ENCODE measurements at regions of chr12 and their contacts with region 1.

Region 1: DNA sequence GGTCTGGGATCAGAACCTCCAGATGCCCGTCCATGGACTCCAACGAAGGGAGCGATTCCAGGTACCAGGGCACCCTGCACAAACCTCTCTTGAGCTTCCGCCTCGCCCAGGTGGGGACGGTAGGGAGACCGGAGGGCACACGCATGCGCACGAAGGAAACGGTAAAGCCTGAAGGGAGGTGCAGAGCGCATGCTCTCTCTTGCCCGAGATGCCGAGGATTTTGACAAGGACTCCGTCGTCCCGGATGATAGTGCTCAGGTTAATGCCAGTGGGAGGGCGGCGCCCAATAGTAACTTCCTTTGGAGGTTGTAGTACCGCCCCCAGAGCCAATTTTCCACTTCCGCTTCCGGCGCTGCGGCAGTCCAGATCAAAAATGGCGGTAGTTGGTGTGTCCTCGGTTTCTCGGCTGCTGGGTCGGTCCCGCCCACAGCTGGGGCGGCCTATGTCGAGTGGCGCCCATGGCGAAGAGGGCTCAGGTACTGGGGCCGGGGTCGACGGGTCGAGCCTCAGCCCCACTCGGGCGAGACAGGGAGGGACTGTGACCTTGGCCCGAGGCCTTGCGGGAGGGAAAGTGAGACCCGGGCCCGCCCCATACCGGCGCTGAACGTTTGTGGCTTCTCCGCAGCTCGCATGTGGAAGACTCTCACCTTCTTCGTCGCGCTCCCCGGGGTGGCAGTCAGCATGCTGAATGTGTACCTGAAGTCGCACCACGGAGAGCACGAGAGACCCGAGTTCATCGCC is at the start of gene COX6A1:
- DNase-seq: peak; percentile 99
- H3K4me3 Mint-ChIP-seq: peak within 1 kb of the TSS; percentile 89
- H3K27ac Mint-ChIP-seq: peak within 1 kb of the TSS; percentile 94
- H3K4me1 Mint-ChIP-seq: peaks cover 23% of the 10 kb centered on the region
- H3K27me3 Mint-ChIP-seq: peaks cover 4% of the 10 kb centered on the region
- total RNA-seq, gene COX6A1: 362 and 363 TPM in 2 replicates

Region 2: DNA sequence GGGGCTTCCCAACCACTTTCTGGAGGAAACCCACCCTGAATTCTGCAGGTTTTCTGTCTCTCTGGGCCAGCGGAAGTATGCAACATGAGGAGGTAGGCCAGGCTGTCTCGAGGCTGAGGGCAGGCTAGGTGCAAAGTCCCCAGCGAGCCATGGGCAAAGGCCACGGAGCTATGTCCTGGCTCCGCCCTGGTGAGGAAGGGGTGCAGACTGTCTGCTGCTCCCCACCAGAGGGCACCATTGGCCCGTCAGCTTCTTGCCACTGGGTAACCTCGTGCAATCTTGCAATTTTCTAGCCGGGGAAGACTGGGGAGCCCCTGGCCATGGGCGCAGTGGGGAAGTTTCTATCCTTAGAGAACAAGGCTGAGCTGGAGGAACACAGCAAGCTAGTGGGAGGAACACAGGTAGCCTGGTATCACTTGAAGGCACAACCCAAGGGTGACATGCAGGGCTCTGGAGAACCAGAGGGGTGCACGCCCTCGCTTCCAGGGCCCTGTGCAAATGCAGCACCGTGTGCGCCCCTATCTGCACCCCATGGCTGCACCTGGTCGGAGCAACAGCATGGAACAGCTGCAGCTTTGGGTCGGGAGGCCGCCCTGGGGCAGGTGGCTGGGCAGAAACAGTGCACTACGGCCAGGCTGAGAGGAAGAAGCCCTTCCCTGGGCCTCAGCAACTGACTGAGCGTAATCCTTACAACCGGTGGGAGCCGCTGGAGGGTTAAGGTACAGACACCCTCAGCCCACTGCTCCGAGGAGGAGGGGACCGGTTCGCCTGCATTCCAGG is 209.4 kb before region 1 on chr12:
- intact Hi-C with region 1: loop called (anchors 10 kb)
- DNase-seq: peak; percentile 96
- H3K4me3 Mint-ChIP-seq: peak overlapping the region; percentile 65
- H3K27ac Mint-ChIP-seq: peak overlapping the region; percentile 79
- H3K4me1 Mint-ChIP-seq: peaks cover 74% of the 10 kb centered on the region
- H3K27me3 Mint-ChIP-seq: no peaks in the 10 kb centered on the region

Region 3: DNA sequence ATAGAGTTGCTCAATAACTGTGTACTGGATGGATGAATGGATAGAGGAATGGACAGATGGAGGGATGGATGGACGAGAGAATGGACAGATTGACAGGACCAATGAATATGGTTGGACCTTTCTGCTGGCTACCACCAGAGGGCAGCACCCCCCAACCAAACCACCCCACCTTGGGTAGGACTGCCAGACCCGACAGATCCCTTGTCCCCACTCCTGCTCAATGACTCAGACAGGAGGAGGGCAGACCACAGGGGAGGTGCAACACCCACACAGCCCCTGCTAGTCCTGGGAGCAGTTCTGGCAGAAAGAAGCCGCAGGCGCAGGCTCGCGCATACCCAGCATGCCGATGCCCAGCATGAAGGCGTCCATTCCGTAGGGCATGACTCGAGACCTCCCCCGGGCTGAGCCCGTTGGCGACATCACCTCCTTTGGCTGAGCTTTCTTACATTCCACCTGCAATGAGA is 81.3 kb before region 1 on chr12:
- intact Hi-C with region 1: loop called (anchors 2 kb)
- DNase-seq: peak; percentile 89
- H3K4me3 Mint-ChIP-seq: no peak overlapping the region
- H3K27ac Mint-ChIP-seq: no peak overlapping the region
- H3K4me1 Mint-ChIP-seq: no peaks in the 10 kb centered on the region
- H3K27me3 Mint-ChIP-seq: peaks cover 35% of the 10 kb centered on the region

Region 4: DNA sequence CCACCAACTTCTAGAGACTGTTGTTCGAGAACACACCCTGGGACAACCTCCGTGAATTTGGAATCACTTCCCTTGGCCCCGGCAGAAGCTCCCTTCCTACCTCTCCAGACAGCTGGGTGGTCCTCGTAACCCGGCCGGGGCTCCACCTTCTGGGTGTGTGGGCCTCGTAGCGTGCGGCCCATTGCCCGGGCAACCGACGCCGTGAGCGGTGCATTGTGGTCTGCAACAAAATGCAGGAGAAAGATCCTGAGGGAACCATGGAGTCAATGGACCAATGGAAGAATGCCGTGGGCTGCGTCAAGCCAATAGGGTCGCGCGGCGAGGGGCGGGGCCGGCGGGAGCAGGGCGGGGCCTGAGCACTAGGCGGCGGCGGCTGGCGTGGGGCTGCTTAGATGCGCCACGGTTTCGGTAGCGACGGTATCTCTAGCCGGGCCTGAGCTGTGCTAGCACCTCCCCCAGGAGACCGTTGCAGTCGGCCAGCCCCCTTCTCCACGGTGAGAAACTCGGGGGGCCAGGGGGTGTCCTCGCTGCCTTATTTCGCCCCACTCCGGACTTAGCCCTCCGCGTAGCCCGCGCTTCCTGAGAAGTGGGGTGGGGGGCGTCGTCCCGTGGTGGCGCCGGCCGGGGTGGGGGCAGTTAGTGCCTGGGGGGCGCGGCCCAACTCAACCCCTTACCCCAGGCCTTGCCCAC is 57.9 kb after region 1 on chr12 and contains the start of gene DYNLL1:
- intact Hi-C with region 1: loop called (anchors 2 kb)
- DNase-seq: peak; percentile 100
- H3K4me3 Mint-ChIP-seq: peak within 1 kb of the TSS; percentile 94
- H3K27ac Mint-ChIP-seq: peak within 1 kb of the TSS; percentile 82
- H3K4me1 Mint-ChIP-seq: peaks cover 31% of the 10 kb centered on the region
- H3K27me3 Mint-ChIP-seq: no peaks in the 10 kb centered on the region
- total RNA-seq, gene DYNLL1: 330 and 351 TPM in 2 replicates

Region 5: GRCh38 chr12:120686690-120687577 is 249.0 kb after region 1 on chr12 and contains the start of gene MLEC:
- intact Hi-C with region 1: loop called (anchors 5 kb)
- DNase-seq: peak; percentile 100
- H3K4me3 Mint-ChIP-seq: peak within 1 kb of the TSS; percentile 92
- H3K27ac Mint-ChIP-seq: peak within 1 kb of the TSS; percentile 96
- H3K4me1 Mint-ChIP-seq: peaks cover 53% of the 10 kb centered on the region
- H3K27me3 Mint-ChIP-seq: peaks cover 2% of the 10 kb centered on the region
- total RNA-seq, gene MLEC: 131 and 149 TPM in 2 replicates

Measured in activated CD4-positive, alpha-beta T cell treated with anti-CD3 and anti-CD28 coated beads, Interleukin-2, amount 10 ng/mL, durations not matched to agents 24 days and 14 days (primary cell).